Prostate gland (tissue), 2 donors: ENCODE measurements at regions of chr4 and their contacts with region 1.

Region 1: GRCh38 chr4:110049951-110050925 is 137.6 kb downstream of the EGF start:
- DNase-seq: peak; percentile 20
- H3K4me3 ChIP-seq: no peak overlapping the region
- H3K27ac ChIP-seq: no peak overlapping the region
- H3K4me1 ChIP-seq: no peaks in the 10 kb centered on the region
- H3K27me3 ChIP-seq: no peaks in the 10 kb centered on the region
- CTCF ChIP-seq: peak; percentile 28 to 75 (median 70)
- POLR2A ChIP-seq: no peak

Region 2: GRCh38 chr4:110196206-110196870 is 146.1 kb after region 1 on chr4:
- intact Hi-C with region 1: loop called (anchors 5 kb)
- DNase-seq: peak; percentile 46
- H3K4me3 ChIP-seq: peak overlapping the region; percentile 82 to 84
- H3K27ac ChIP-seq: peak overlapping the region; percentile 85 to 91
- H3K4me1 ChIP-seq: peaks cover 4% of the 10 kb centered on the region
- H3K27me3 ChIP-seq: no peaks in the 10 kb centered on the region
- CTCF ChIP-seq: no peak
- POLR2A ChIP-seq: no peak

Region 3: DNA sequence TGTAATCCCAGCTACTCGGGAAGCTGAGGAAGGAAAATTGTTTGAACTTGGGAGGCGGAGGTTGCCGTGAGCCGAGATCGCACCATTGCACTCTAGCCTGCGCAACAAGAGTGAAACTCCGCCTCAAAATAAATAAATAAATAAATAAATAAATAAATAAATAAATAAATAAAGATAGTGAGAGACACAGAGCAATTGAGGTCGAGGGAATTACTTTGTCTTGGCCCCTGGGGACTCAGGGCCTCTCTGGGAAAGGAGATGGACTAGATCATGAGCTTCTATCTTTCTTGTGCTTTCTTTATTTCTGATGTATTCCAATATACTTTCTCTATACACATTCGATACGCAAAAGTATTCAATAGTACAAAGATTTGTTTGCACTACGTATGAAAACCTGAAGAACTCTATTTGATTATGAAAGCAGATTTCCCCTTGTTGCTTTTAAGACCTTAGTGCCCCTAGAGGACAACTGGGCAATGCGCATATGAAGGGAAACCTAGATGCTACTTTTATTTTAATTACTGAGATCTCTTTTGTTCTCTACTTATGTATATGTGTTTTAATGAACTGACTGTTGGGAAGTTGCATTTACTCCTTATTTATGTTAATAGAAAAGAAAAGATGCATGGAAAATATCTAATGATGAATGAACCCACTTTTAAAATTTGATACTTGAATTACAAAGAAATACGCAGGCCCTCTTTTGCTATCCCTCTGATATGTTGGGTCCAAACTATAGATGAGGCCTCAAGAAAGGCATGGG is 160.9 kb after region 1 on chr4:
- intact Hi-C with region 1: loop called (anchors 5 kb)
- DNase-seq: no peak
- H3K4me3 ChIP-seq: no peak overlapping the region
- H3K27ac ChIP-seq: no peak overlapping the region
- H3K4me1 ChIP-seq: no peaks in the 10 kb centered on the region
- H3K27me3 ChIP-seq: no peaks in the 10 kb centered on the region
- CTCF ChIP-seq: peak; percentile 14 to 69 (median 50)
- POLR2A ChIP-seq: no peak